CD4-positive, alpha-beta T cell (primary cell): ENCODE measurements at regions of chr21 and their contacts with region 1.

Region 1: DNA sequence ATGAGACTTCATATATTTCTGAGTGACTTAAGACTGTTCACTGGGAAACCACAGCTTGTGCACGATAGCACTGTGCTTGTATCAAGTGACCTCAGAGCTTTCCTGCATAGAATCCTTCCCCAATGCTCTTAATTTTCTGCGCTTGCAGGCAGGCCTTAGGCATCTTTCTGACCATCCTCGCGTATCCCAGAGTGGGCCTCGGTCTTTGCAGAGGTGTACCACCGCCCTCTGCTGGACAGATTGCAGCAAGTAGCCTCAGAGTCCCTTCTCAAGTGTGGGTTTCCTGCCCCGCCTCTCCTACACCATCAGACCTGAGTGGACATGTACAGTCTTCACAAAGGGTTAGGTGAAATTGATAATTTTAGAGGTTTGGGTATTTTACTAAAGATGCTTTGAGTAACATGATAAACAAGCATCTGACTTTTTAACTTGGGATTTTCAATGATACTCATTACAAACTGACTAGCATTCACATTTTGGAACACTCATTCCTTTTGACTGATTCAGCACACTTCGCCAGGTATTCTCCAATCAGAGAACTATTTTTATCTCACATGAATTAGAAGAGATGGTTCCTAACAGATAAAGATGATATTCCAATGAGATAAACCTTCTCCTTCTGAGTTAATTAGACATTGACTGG is 246.5 kb upstream of the USP25 start:
- DNase-seq: peak; percentile 58 to 86 (median 68)
- ATAC-seq: peak; percentile 98
- H3K4me3 ChIP-seq: no peak overlapping the region
- H3K4me3 Mint-ChIP-seq: no peak overlapping the region
- H3K27ac ChIP-seq: no peak overlapping the region
- H3K27ac Mint-ChIP-seq: no peak overlapping the region
- H3K4me1 ChIP-seq: peaks cover 4% of the 10 kb centered on the region
- H3K4me1 Mint-ChIP-seq: peaks cover 32% of the 10 kb centered on the region
- H3K27me3 ChIP-seq: no peaks in the 10 kb centered on the region
- H3K27me3 Mint-ChIP-seq: no peaks in the 10 kb centered on the region
- CTCF ChIP-seq: peak; percentile 95

Region 2: DNA sequence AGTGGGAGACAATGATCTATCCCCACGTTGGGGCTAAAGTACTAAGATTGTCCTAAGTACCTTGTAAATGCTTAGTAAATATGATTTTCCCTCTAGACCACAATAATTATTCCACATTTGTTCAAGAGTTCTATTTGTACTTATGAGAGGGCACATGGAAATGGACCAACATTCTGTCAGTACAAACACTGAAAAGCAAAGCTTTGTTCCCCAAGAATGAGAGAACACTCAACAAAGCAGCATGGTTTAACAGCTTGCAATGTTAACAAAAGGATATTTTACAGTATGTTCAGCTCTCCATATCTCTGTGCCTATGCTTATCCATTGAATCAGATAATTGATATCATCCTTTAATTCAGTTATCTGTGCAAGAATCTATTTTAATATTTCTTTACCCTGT is 1231.9 kb before region 1 on chr21:
- CTCF ChIA-PET with region 1: no interaction called
- POLR2A ChIA-PET with region 1: no interaction called
- intact Hi-C with region 1: loop called in 1 of 2 experiments (anchors 5 kb)
- DNase-seq: no peak
- ATAC-seq: no peak
- H3K4me3 ChIP-seq: no peak overlapping the region
- H3K4me3 Mint-ChIP-seq: no peak overlapping the region
- H3K27ac ChIP-seq: no peak overlapping the region
- H3K27ac Mint-ChIP-seq: no peak overlapping the region
- H3K4me1 ChIP-seq: peaks cover 3% of the 10 kb centered on the region
- H3K4me1 Mint-ChIP-seq: peaks cover 5% of the 10 kb centered on the region
- H3K27me3 ChIP-seq: no peaks in the 10 kb centered on the region
- H3K27me3 Mint-ChIP-seq: peaks cover 29% of the 10 kb centered on the region
- CTCF ChIP-seq: no peak

Region 3: GRCh38 chr21:14737922-14738321 is 745.3 kb before region 1 on chr21:
- CTCF ChIA-PET with region 1: no interaction called
- POLR2A ChIA-PET with region 1: no interaction called
- intact Hi-C with region 1: loop called in 1 of 2 experiments (anchors 10 kb)
- DNase-seq: peak in 11 of 14 experiments; percentile 8 to 86 (median 34)
- ATAC-seq: peak; percentile 95
- H3K4me3 ChIP-seq: no peak overlapping the region
- H3K4me3 Mint-ChIP-seq: no peak overlapping the region
- H3K27ac ChIP-seq: no peak overlapping the region
- H3K27ac Mint-ChIP-seq: no peak overlapping the region
- H3K4me1 ChIP-seq: no peaks in the 10 kb centered on the region
- H3K4me1 Mint-ChIP-seq: peaks cover 5% of the 10 kb centered on the region
- H3K27me3 ChIP-seq: no peaks in the 10 kb centered on the region
- H3K27me3 Mint-ChIP-seq: no peaks in the 10 kb centered on the region
- CTCF ChIP-seq: peak; percentile 75

Region 4: GRCh38 chr21:15064576-15065391 is 418.5 kb before region 1 on chr21 and contains the start of gene NRIP1:
- CTCF ChIA-PET with region 1: no interaction called
- POLR2A ChIA-PET with region 1: interaction called, 8 read pairs
- intact Hi-C with region 1: loop called (anchors 1 to 2 kb)
- DNase-seq: peak; percentile 72 to 93 (median 82)
- ATAC-seq: peak; percentile 76
- H3K4me3 ChIP-seq: peak within 1 kb of the TSS; percentile 91
- H3K4me3 Mint-ChIP-seq: peak within 1 kb of the TSS; percentile 97
- H3K27ac ChIP-seq: peak within 1 kb of the TSS; percentile 79 to 84
- H3K27ac Mint-ChIP-seq: peak within 1 kb of the TSS; percentile 98
- H3K4me1 ChIP-seq: peaks cover 13% of the 10 kb centered on the region
- H3K4me1 Mint-ChIP-seq: peaks cover 50% of the 10 kb centered on the region
- H3K27me3 ChIP-seq: no peaks in the 10 kb centered on the region
- H3K27me3 Mint-ChIP-seq: peaks cover 5% of the 10 kb centered on the region
- CTCF ChIP-seq: no peak
- total RNA-seq, gene NRIP1: 41.6 to 50.1 TPM

Region 5: GRCh38 chr21:15422783-15423182 is 60.5 kb before region 1 on chr21:
- CTCF ChIA-PET with region 1: no interaction called
- POLR2A ChIA-PET with region 1: no interaction called
- intact Hi-C with region 1: no loop called
- DNase-seq: no peak
- ATAC-seq: no peak
- H3K4me3 ChIP-seq: no peak overlapping the region
- H3K4me3 Mint-ChIP-seq: no peak overlapping the region
- H3K27ac ChIP-seq: no peak overlapping the region
- H3K27ac Mint-ChIP-seq: no peak overlapping the region
- H3K4me1 ChIP-seq: no peaks in the 10 kb centered on the region
- H3K4me1 Mint-ChIP-seq: peaks cover 14% of the 10 kb centered on the region
- H3K27me3 ChIP-seq: no peaks in the 10 kb centered on the region
- H3K27me3 Mint-ChIP-seq: no peaks in the 10 kb centered on the region
- CTCF ChIP-seq: no peak

Region 6: GRCh38 chr21:15534450-15534886 is 51.2 kb after region 1 on chr21:
- CTCF ChIA-PET with region 1: no interaction called
- POLR2A ChIA-PET with region 1: interaction called, 3 read pairs
- intact Hi-C with region 1: loop called in 1 of 2 experiments (anchors 10 kb)
- DNase-seq: no peak
- ATAC-seq: no peak
- H3K4me3 ChIP-seq: no peak overlapping the region
- H3K4me3 Mint-ChIP-seq: no peak overlapping the region
- H3K27ac ChIP-seq: no peak overlapping the region
- H3K27ac Mint-ChIP-seq: no peak overlapping the region
- H3K4me1 ChIP-seq: no peaks in the 10 kb centered on the region
- H3K4me1 Mint-ChIP-seq: peaks cover 11% of the 10 kb centered on the region
- H3K27me3 ChIP-seq: no peaks in the 10 kb centered on the region
- H3K27me3 Mint-ChIP-seq: no peaks in the 10 kb centered on the region
- CTCF ChIP-seq: no peak

Region 7: GRCh38 chr21:15775981-15776380 is 292.7 kb after region 1 on chr21:
- CTCF ChIA-PET with region 1: no interaction called
- POLR2A ChIA-PET with region 1: no interaction called
- intact Hi-C with region 1: no loop called
- DNase-seq: no peak
- ATAC-seq: no peak
- H3K4me3 ChIP-seq: no peak overlapping the region
- H3K4me3 Mint-ChIP-seq: no peak overlapping the region
- H3K27ac ChIP-seq: no peak overlapping the region
- H3K27ac Mint-ChIP-seq: no peak overlapping the region
- H3K4me1 ChIP-seq: no peaks in the 10 kb centered on the region
- H3K4me1 Mint-ChIP-seq: peaks cover 47% of the 10 kb centered on the region
- H3K27me3 ChIP-seq: no peaks in the 10 kb centered on the region
- H3K27me3 Mint-ChIP-seq: no peaks in the 10 kb centered on the region
- CTCF ChIP-seq: no peak